SK-N-SH (cell line): ENCODE measurements at regions of chr22 and their contacts with region 1.

Region 1: GRCh38 chr22:30423982-30424963 is 1.3 kb upstream of the MTFP1 start:
- DNase-seq: peak; percentile 93
- H3K4me3 ChIP-seq: peak overlapping the region; percentile 67 to 74
- H3K27ac ChIP-seq: peak overlapping the region; percentile 97 to 99
- H3K4me1 ChIP-seq: peaks cover 41 to 46% of the 10 kb centered on the region in 2 experiments
- H3K27me3 ChIP-seq: no peaks in the 10 kb centered on the region
- CTCF ChIP-seq: no peak
- EP300 ChIP-seq: peak in 1 of 2 experiments; percentile 30; a peak in 1 of 4 replicates
- RAD21 ChIP-seq: no peak

Region 2: GRCh38 chr22:30396871-30397655 is 27.2 kb before region 1 on chr22 and contains the start of gene SEC14L2:
- CTCF ChIA-PET with region 1: interaction called, 20 read pairs
- POLR2A ChIA-PET with region 1: interaction called, 19 read pairs
- DNase-seq: peak; percentile 90
- H3K4me3 ChIP-seq: peak within 1 kb of the TSS; percentile 63 to 75
- H3K27ac ChIP-seq: no peak within 1 kb of the TSS; a peak in 1 of 4 replicates
- H3K4me1 ChIP-seq: peaks cover 0 to 14% of the 10 kb centered on the region in 2 experiments; a peak in 2 of 4 replicates
- H3K27me3 ChIP-seq: no peaks in the 10 kb centered on the region
- CTCF ChIP-seq: no peak
- EP300 ChIP-seq: no peak
- RAD21 ChIP-seq: no peak
- polyA plus RNA-seq, gene SEC14L2: 14.0 and 16.1 TPM in 2 replicates

Region 3: DNA sequence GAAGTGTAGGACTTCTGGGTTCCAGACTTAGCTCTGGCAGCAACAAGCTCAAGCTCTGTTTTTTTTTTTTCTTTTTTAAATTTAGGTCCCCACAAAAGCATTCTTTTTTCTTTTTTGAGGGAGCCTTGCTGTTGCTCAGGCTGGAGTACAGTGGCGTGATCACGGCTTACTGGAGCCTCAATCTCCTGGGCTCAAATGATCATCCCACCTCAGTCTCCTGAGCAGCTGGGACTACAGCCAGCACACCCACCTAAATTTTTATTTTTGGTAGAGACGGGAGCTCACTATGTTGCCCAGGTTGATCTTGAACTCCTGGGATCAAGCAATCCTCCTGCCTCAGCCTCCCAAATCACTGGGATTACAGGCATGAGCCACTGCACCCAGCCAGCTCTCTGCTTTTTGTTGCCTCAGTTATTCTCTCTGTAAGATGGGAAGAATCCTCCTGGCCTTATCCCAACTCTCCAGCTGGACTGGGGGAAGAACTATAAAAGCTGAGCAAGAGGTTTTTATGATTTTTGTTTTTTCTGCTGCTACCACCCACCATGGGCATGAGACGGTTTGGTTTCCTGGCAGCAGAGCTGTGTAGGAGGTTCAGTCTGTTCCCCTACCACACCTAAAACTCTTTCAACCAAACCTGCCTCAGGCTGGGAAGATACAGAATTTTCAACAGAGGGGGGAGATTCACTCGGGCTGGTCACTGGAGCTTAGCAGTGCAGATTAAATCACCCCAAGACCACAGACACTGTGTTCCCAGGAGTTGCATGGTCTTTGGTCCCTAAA is 10.3 kb before region 1 on chr22:
- CTCF ChIA-PET with region 1: interaction called, 10 read pairs
- POLR2A ChIA-PET with region 1: interaction called, 10 read pairs
- DNase-seq: no peak
- H3K4me3 ChIP-seq: no peak overlapping the region
- H3K27ac ChIP-seq: no peak overlapping the region
- H3K4me1 ChIP-seq: no peaks in the 10 kb centered on the region
- H3K27me3 ChIP-seq: no peaks in the 10 kb centered on the region
- CTCF ChIP-seq: no peak
- EP300 ChIP-seq: no peak
- RAD21 ChIP-seq: no peak